Endothelial cell of umbilical vein (primary cell): ENCODE measurements at regions of chr21 and their contacts with region 1.

Region 1: GRCh38 chr21:36859744-36860501 is 106.5 kb downstream of the HLCS start:
- DNase-seq: peak; percentile 58
- H3K4me3 ChIP-seq: peak overlapping the region in 1 of 3 experiments; percentile 42
- H3K27ac ChIP-seq: peak overlapping the region; percentile 90
- H3K4me1 ChIP-seq: peaks cover 19% of the 10 kb centered on the region
- H3K27me3 ChIP-seq: no peaks in the 10 kb centered on the region
- CTCF ChIP-seq: no peak
- POLR2A ChIP-seq: peak; percentile 71

Region 2: DNA sequence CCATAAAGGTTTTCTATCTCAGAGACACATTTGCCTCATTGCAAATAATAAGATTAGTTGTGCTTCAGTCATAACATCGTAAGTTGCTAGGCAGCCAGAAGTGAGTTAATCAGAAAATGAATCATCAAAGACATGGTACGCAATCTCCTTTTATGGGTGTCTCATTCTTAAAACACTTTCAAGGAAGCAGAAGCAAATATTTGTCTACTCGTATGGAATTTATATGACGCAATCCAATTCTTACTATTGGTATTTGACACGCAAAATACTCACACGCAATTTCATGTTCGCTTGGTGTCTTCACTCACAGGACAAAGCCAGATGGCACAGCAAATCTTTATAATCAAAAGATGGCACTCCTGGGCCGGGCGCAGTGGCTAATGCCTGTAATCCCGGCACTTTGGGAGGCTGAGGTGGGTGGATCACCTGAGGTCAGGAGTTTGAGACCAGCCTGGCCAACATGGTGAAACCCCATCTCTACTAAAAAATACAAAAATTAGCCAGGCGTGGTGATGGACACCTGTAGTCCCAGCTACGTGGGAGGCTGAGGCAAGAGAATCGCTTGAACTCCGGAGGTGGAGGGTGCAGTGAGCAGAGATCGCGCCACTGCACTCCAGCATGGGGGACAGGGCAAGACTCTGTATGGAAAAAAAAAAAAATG is 50.1 kb after region 1 on chr21:
- CTCF ChIA-PET with region 1: interaction called, 3 read pairs
- POLR2A ChIA-PET with region 1: interaction called, 6 read pairs
- dilution Hi-C with region 1: no loop called
- intact Hi-C with region 1: loop called (anchors 1 kb)
- DNase-seq: peak; percentile 86
- H3K4me3 ChIP-seq: no peak overlapping the region
- H3K27ac ChIP-seq: peak overlapping the region; percentile 99
- H3K4me1 ChIP-seq: peaks cover 6% of the 10 kb centered on the region
- H3K27me3 ChIP-seq: no peaks in the 10 kb centered on the region
- CTCF ChIP-seq: no peak
- POLR2A ChIP-seq: no peak